Activated T-helper 2 cell treated with anti-CD3 and anti-CD28 coated beads, Interferon-gamma antibody, Interleukin-2, Interleukin-4, amounts not matched to agents 10 μg/mL and 5 μg/mL and 100 μg/mL, durations not matched to agents 14 hours and 24 hours and 36 hours (primary cell): ENCODE measurements at regions of chr2 and their contacts with region 1.

Region 1: DNA sequence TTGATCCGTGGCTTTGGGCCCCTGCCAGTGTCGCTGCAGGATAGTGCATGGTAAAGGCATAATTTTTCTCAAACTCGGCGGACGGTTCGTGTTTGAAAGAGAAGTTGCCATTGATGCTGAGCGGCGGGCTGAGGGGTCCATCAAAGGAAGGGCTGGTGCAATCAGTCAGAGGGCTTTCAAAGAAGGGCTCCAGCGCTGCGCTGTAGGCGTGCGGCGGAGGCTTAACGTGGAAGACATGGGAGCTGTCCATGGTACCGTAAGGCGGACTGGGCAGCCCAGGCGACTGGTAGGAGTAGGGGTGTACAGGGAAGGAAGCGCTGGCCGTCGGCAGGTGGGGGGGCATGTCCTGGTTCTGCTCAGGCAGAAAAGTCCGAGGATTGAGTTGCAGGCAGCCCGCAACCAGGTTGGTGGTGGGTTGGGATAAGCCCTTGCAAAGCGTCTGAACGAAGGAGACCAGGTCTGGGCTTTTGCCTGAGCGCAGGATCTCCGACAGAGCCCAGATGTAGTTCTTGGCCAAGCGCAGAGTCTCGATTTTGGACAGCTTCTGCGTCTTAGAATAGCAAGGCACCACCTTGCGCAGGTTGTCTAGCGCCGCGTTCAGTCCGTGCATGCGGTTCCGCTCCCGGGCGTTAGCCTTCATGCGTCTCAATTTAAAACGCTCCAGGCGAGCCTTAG is 2.3 kb downstream of the NEUROD1 start:
- DNase-seq: peak; percentile 57
- H3K4me3 Mint-ChIP-seq: no peak overlapping the region
- H3K27ac Mint-ChIP-seq: no peak overlapping the region
- H3K4me1 Mint-ChIP-seq: peaks cover 27% of the 10 kb centered on the region
- H3K27me3 Mint-ChIP-seq: peaks cover 80% of the 10 kb centered on the region

Region 2: GRCh38 chr2:181573140-181573736 is 104.8 kb before region 1 on chr2:
- intact Hi-C with region 1: loop called (anchors 5 kb)
- DNase-seq: no peak
- H3K4me3 Mint-ChIP-seq: no peak overlapping the region
- H3K27ac Mint-ChIP-seq: no peak overlapping the region
- H3K4me1 Mint-ChIP-seq: peaks cover 3% of the 10 kb centered on the region
- H3K27me3 Mint-ChIP-seq: peaks cover 26% of the 10 kb centered on the region

Region 3: DNA sequence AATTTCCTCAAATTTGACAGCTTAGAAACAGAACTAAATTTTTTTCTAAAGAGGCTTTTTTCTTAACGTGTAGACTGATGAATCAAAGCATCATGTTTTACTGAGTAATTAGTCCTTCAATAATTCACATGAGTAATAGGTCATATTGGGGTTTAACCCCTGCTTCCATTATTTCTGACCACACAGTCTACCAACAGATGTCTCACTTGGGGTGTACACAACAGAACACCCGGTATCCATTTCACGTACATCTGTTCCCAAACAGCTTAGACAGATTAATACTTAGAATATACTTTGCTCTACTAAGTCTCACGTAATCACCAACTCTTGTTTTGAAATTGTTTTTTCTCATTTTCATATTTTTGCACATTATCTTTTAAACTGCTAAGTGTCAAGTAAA is 36.0 kb before region 1 on chr2:
- intact Hi-C with region 1: no loop called
- DNase-seq: no peak
- H3K4me3 Mint-ChIP-seq: no peak overlapping the region
- H3K27ac Mint-ChIP-seq: no peak overlapping the region
- H3K4me1 Mint-ChIP-seq: no peaks in the 10 kb centered on the region
- H3K27me3 Mint-ChIP-seq: peaks cover 43% of the 10 kb centered on the region

Region 4: GRCh38 chr2:181656450-181657291 is 21.4 kb before region 1 on chr2 and contains the start of gene CERKL:
- intact Hi-C with region 1: loop called (anchors 2 kb)
- DNase-seq: no peak
- H3K4me3 Mint-ChIP-seq: peak within 1 kb of the TSS; percentile 79
- H3K27ac Mint-ChIP-seq: no peak within 1 kb of the TSS
- H3K4me1 Mint-ChIP-seq: peaks cover 9% of the 10 kb centered on the region
- H3K27me3 Mint-ChIP-seq: peaks cover 65% of the 10 kb centered on the region
- total RNA-seq, gene CERKL: not detected in 2 replicates